Right cardiac atrium (tissue), 5 donors: ENCODE measurements at regions of chr15 and their contacts with region 1.

Region 1: GRCh38 chr15:26287381-26287780 is 424.3 kb upstream of the ATP10A start:
- DNase-seq: no peak
- ATAC-seq: no peak
- H3K4me3 ChIP-seq: no peak overlapping the region
- H3K27ac ChIP-seq: no peak overlapping the region
- H3K4me1 ChIP-seq: no peaks in the 10 kb centered on the region
- H3K27me3 ChIP-seq: no peaks in the 10 kb centered on the region

Region 2: GRCh38 chr15:26773069-26773877 is 485.9 kb after region 1 on chr15:
- intact Hi-C with region 1: loop called in 1 of 4 experiments (anchors 10 kb)
- DNase-seq: peak; percentile 75 to 90 (median 90)
- ATAC-seq: peak; percentile 91 to 92
- H3K4me3 ChIP-seq: peak overlapping the region; percentile 83
- H3K27ac ChIP-seq: peak overlapping the region; percentile 67
- H3K4me1 ChIP-seq: no peaks in the 10 kb centered on the region
- H3K27me3 ChIP-seq: peaks cover 3% of the 10 kb centered on the region